ENCODE measurements at regions of chr1 and their contacts with region 1.

Region 1: GRCh38 chr1:149962123-149962548 is 25.5 kb upstream of the MTMR11 start:
- DNase-seq: no peak
- ATAC-seq: peak; percentile 91

Region 2: DNA sequence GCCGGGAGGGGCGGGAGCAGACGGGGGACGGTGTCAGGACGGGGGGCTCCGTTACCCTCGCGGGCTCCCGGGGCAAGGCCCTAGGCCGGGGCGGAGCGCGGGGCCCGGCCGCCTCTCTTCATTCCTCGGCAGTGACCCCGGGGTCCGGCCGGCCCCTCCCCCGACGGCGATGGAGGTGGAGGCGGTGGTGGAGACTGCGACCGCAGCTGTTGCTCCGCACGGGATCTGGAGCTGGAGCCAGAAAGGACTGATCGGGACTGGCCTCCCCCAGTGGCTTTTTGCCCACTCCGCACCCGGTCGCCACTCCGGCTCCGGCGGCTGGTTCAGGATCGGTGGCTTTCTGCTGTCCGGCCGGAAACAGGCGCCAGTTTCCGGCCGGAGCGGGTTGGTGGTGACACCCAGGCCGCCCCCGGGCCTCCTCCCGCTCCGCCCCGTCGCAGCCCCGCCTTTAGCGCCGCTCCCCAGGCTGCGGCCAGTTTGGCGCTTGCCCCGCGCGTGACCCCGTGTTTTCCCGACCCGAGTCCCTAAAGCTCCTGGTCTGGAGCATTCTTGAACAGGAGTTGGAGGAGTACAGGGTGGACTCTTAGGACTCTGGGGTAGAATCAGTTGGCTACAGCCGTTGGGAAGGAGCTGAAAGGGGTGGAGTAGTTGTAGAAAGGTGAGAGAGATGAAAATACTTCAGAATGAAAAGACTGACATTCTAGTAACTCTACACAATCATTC is 48.4 kb after region 1 on chr1 and contains the start of gene OTUD7B:
- intact Hi-C with region 1: loop called (anchors 10 kb)
- DNase-seq: peak; percentile 92
- ATAC-seq: peak; percentile 96
- total RNA-seq, gene OTUD7B: 23.0 TPM

Region 3: GRCh38 chr1:150049926-150050325 is 87.8 kb after region 1 on chr1:
- intact Hi-C with region 1: loop called (anchors 1 kb)
- DNase-seq: no peak
- ATAC-seq: no peak

Region 4: DNA sequence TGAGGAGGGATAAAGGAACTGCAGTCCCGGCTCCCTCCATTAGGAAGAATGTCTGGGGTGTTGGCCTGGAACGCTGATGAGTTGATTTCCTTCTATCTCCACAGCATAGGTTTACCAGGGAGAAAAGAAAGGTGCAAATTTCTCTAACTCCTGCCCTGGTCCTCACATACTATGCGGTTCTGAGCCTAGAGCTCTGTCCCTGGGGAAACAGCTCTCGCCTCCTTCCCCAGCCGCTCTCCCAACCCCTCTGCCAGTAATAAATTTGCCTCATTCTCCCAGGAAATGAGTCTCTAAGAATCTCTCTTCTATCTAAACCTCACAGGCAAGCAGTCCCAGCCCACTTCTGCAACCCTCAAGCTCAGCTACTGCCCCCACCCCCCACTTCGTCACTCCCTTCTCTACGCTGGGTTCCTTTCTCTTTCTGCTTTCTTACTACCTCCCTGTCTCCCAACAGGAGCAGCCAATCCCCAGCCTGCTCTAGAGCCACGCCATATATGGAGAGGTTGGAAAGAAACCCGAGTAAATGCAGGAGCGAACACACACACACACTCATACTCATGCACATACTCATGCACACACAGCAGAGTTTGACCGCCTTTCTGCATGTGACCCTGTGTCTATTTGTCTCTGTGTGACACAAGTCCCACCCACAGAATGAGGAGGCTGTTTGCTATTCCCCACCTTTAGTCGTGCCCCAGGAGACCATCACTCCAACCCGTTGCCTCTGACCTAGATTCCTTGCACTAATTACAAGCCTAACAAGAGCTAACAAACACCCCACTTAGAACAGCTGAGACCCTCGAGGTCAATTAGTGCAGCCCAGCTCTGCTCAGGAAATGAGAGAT is 200.9 kb after region 1 on chr1:
- intact Hi-C with region 1: loop called (anchors 10 kb)
- DNase-seq: peak; percentile 82
- ATAC-seq: peak; percentile 91

Measured in left ventricle myocardium superior (tissue), 1 donor.